Upper lobe of right lung (tissue), 1 donor: ENCODE measurements at regions of chr16 and their contacts with region 1.

Region 1: GRCh38 chr16:4293822-4294457 is 21.1 kb upstream of the TFAP4 start:
- DNase-seq: peak; percentile 75
- ATAC-seq: peak; percentile 70
- H3K4me3 ChIP-seq: no peak overlapping the region
- H3K27ac ChIP-seq: peak overlapping the region; percentile 42
- H3K4me1 ChIP-seq: peaks cover 26% of the 10 kb centered on the region
- H3K27me3 ChIP-seq: no peaks in the 10 kb centered on the region
- CTCF ChIP-seq: no peak

Region 2: GRCh38 chr16:4328046-4328503 is 34.1 kb after region 1 on chr16:
- intact Hi-C with region 1: loop called (anchors 5 kb)
- DNase-seq: peak; percentile 90
- ATAC-seq: peak; percentile 76
- H3K4me3 ChIP-seq: peak overlapping the region; percentile 40
- H3K27ac ChIP-seq: peak overlapping the region; percentile 78
- H3K4me1 ChIP-seq: peaks cover 58% of the 10 kb centered on the region
- H3K27me3 ChIP-seq: no peaks in the 10 kb centered on the region
- CTCF ChIP-seq: peak; percentile 62